ENCODE measurements at regions of chr12 and their contacts with region 1.

Region 1: DNA sequence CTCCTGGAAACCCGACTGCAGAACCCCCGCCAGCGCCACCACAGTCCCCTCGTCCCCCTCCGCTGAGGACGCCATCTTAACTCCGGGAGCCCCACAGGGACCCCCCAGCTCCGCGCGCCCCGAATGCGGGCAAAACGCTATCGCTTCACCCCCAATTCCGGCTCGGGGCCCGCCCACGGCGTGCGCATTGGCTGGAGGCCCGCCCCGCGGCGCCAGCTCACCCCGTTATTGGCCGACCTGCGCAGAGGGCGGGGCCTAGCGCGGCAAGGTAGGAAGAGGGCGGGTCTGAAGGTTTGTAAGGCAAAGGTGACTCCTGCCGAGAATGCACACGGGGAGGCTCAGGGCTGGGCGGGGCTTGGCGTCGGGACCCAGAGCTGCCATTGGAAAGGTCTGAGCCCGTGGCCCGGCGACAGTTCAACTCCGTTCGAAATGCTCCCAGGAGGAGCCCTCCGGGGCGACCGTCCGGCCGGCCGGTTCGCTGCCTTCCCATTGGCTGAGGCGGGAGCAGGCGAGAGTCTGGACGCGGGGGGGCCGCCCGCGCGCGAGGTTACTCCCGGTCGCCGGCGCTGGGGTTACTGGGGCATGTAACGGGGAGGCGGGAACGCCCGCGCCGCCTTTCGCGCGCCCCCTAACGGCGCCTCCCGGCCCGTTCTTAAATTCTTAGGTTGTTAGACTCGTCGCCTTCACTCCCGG is at the start of gene LPCAT3:
- DNase-seq: peak; percentile 98
- H3K4me3 Mint-ChIP-seq: peak within 1 kb of the TSS; percentile 91
- H3K27ac Mint-ChIP-seq: peak within 1 kb of the TSS; percentile 84
- H3K4me1 Mint-ChIP-seq: peaks cover 24% of the 10 kb centered on the region
- H3K27me3 Mint-ChIP-seq: no peaks in the 10 kb centered on the region
- total RNA-seq, gene LPCAT3: 30.9 and 34.0 TPM in 2 replicates

Region 2: DNA sequence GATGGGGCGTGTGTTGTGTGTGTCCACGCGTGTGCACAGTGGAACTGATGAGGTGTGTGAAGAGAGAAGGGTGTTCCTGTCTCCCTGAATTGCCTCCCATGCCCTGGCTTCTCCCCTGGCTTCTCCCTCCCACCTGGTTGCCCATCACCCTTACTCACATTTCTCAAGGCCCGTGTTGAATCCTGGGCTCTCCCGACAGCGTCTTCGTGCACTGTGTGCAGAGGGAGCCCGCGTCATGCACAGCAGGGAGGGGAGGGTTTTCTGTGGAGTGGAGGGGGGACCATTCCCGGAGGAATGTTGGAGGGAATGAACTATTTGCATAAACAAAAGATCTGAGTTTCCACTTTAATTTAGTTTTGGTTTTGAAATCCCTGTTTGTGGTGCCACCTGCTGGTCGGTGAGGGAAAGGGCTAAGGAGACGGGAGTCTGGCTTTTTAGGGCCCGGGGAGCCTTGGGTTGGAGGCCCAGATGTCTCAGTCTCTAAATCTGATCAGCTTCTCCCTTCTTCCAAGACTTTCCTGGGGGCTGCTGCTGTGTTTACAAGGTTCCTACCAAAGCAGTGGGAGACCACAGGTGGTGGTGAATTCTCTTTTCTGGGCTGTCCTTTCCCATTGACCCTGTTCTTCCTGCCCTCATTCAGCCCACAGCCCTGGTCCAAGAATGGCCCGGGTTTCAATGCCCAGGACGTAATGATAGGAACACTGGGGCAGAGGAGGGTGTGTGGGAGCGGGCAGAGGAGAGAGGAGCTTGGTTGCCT is 73.9 kb after region 1 on chr12 and contains the start of gene C1R:
- intact Hi-C with region 1: loop called (anchors 1 kb)
- DNase-seq: peak; percentile 45
- H3K4me3 Mint-ChIP-seq: peak within 1 kb of the TSS; percentile 75
- H3K27ac Mint-ChIP-seq: peak within 1 kb of the TSS; percentile 63
- H3K4me1 Mint-ChIP-seq: peaks cover 6% of the 10 kb centered on the region
- H3K27me3 Mint-ChIP-seq: no peaks in the 10 kb centered on the region
- total RNA-seq, gene C1R: 1.5 and 2.5 TPM in 2 replicates

Region 3: DNA sequence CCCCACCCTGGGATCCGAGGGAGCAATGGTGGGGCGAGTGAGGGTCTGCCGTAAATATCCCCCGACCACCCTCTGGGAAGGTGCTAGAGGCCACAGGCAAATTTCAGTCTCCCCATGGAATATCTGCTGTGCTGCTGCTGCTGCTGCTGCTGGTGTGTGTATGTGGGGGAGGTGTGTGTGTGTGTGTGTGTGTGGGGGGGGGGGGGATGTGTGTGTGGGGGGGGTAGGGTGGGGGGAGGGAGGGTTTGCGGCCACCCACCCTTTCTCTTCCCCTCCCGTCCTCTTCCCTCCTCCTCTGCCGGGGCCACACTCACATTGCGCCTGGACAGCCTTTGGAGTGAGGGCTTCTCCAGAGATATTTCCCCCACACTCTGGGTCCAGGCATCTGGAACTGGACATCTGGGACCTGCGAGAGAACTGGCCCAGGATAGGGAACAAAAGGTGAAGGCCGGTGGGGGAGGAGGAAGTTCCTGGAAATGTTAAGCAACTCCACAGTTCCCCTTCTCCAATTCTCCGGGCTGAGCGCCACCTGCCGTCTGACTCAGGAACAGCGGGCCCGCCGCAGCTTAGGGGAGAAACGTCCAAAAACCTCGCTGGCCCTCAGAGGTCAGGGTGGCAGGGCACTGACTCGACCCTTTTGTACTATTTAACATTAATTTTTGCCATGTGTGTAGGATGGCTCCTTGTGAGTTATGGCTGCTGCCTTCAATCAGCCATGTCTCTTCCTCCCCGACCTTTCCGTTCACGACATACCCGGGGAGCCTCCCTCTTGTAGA is 90.5 kb after region 1 on chr12 and contains the start of gene C1RL:
- intact Hi-C with region 1: loop called (anchors 1 kb)
- DNase-seq: peak; percentile 66
- H3K4me3 Mint-ChIP-seq: peak within 1 kb of the TSS; percentile 91
- H3K27ac Mint-ChIP-seq: peak within 1 kb of the TSS; percentile 89
- H3K4me1 Mint-ChIP-seq: peaks cover 39% of the 10 kb centered on the region
- H3K27me3 Mint-ChIP-seq: no peaks in the 10 kb centered on the region
- total RNA-seq, gene C1RL: 20.2 and 28.7 TPM in 2 replicates

Measured in activated T-helper 2 cell treated with anti-CD3 and anti-CD28 coated beads, Interferon-gamma antibody, Interleukin-2, Interleukin-4, amounts not matched to agents 10 μg/mL and 5 μg/mL and 100 μg/mL, durations not matched to agents 14 hours and 24 hours and 36 hours (primary cell).